B cell (primary cell): ENCODE measurements at regions of chr5 and their contacts with region 1.

Region 1: GRCh38 chr5:127072861-127073846 is at the start of gene C5orf63:
- DNase-seq: peak; percentile 88
- ATAC-seq: peak; percentile 97
- H3K4me3 ChIP-seq: peak within 1 kb of the TSS; percentile 60 to 76 (median 73)
- H3K4me3 Mint-ChIP-seq: peak within 1 kb of the TSS; percentile 92
- H3K27ac ChIP-seq: peak within 1 kb of the TSS; percentile 66 to 93
- H3K27ac Mint-ChIP-seq: peak within 1 kb of the TSS; percentile 93
- H3K4me1 ChIP-seq: peaks cover 7 to 13% of the 10 kb centered on the region in 2 donors
- H3K4me1 Mint-ChIP-seq: peaks cover 9% of the 10 kb centered on the region
- H3K27me3 ChIP-seq: no peaks in the 10 kb centered on the region
- H3K27me3 Mint-ChIP-seq: no peaks in the 10 kb centered on the region
- CTCF ChIP-seq: no peak
- total RNA-seq, gene C5orf63: 20.0 and 25.4 TPM in 2 replicates

Region 2: GRCh38 chr5:126972062-126972895 is 100.9 kb before region 1 on chr5:
- CTCF ChIA-PET with region 1: no interaction called
- POLR2A ChIA-PET with region 1: no interaction called
- intact Hi-C with region 1: loop called (anchors 5 kb)
- DNase-seq: peak; percentile 85
- ATAC-seq: peak; percentile 78
- H3K4me3 ChIP-seq: peak overlapping the region in 3 of 5 experiments; percentile 3 to 53 (median 39)
- H3K4me3 Mint-ChIP-seq: peak overlapping the region; percentile 91
- H3K27ac ChIP-seq: peak overlapping the region; percentile 70 to 97
- H3K27ac Mint-ChIP-seq: peak overlapping the region; percentile 99
- H3K4me1 ChIP-seq: peaks cover 72 to 73% of the 10 kb centered on the region in 2 donors
- H3K4me1 Mint-ChIP-seq: peaks cover 74% of the 10 kb centered on the region
- H3K27me3 ChIP-seq: no peaks in the 10 kb centered on the region
- H3K27me3 Mint-ChIP-seq: no peaks in the 10 kb centered on the region
- CTCF ChIP-seq: no peak

Region 3: DNA sequence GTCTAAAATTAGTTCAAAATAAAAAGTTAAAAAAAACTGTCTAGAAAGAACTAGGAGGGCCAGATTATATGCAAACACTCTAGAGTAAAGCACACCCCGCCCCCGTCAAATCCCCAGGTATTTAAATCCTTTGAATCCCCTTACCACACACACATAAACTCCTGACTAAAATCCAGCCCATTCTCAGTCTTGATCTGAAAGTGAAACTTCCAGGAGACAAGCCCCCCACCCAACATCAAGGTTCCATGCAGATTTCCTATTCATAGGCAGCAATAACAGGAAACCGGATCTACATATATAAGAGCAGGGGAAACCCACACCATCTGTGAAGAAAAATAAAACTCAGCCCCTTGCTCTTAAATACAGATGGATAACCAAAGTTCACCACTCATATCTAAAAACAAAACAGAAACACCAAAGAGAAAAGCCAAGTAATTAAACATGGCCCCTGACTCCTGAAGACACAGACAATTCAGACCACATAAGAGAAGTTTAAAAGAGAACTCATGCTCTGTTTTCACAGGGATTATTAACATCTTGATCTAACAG is 85.1 kb before region 1 on chr5:
- CTCF ChIA-PET with region 1: no interaction called
- POLR2A ChIA-PET with region 1: no interaction called
- intact Hi-C with region 1: loop called (anchors 5 kb)
- DNase-seq: peak; percentile 85
- ATAC-seq: peak; percentile 87
- H3K4me3 ChIP-seq: peak overlapping the region; percentile 27 to 52 (median 42)
- H3K4me3 Mint-ChIP-seq: peak overlapping the region; percentile 88
- H3K27ac ChIP-seq: peak overlapping the region; percentile 91 to 94
- H3K27ac Mint-ChIP-seq: peak overlapping the region; percentile 97
- H3K4me1 ChIP-seq: peaks cover 71% of the 10 kb centered on the region in 2 donors
- H3K4me1 Mint-ChIP-seq: peaks cover 80% of the 10 kb centered on the region
- H3K27me3 ChIP-seq: no peaks in the 10 kb centered on the region
- H3K27me3 Mint-ChIP-seq: no peaks in the 10 kb centered on the region
- CTCF ChIP-seq: no peak

Region 4: GRCh38 chr5:127229185-127229889 is 156.2 kb after region 1 on chr5:
- CTCF ChIA-PET with region 1: no interaction called
- POLR2A ChIA-PET with region 1: no interaction called
- intact Hi-C with region 1: loop called (anchors 2 kb)
- DNase-seq: peak; percentile 76
- ATAC-seq: peak; percentile 84
- H3K4me3 ChIP-seq: peak overlapping the region; percentile 56 to 79 (median 68)
- H3K4me3 Mint-ChIP-seq: peak overlapping the region; percentile 87
- H3K27ac ChIP-seq: peak overlapping the region; percentile 67
- H3K27ac Mint-ChIP-seq: peak overlapping the region; percentile 89
- H3K4me1 ChIP-seq: peaks cover 8 to 15% of the 10 kb centered on the region in 2 donors
- H3K4me1 Mint-ChIP-seq: peaks cover 19% of the 10 kb centered on the region
- H3K27me3 ChIP-seq: no peaks in the 10 kb centered on the region
- H3K27me3 Mint-ChIP-seq: no peaks in the 10 kb centered on the region
- CTCF ChIP-seq: no peak